Panc1 (cell line): ENCODE measurements at regions of chr6 and their contacts with region 1.

Region 1: DNA sequence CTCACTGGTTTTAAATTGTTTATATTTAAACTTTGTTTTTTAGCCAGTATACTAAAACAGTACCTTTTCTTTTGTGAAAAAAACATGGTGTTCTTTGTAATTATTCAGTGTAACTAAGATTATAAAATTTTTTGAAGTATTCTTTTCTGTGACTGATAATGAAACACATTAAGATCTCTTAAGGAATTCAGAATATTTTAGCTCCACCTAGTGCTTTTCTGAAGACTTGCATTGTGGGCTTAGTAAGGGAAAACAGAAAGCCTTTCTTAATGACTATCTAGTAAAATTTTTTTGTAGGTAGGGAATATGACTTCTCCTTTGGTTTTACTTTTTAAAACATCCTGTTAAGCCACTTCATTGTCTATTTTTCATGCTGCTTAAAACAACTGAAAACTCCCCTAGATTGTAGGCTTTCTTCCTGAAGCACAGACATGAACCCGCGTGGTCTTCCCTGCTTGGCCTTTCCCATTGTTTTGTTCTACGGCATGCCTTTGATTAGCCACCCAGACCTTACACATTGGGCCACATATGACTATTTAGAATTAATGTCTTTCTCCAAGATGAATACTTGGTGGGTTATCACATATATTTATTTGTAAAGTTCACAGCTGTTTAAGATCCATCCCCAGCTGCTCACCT is 72.1 kb downstream of the AFDN start:
- DNase-seq: no peak
- ATAC-seq: peak; percentile 72; the same call in 1 of the 2 replicates
- H3K4me3 ChIP-seq: no peak overlapping the region
- H3K27ac ChIP-seq: no peak overlapping the region
- H3K4me1 ChIP-seq: no peaks in the 10 kb centered on the region
- H3K27me3 ChIP-seq: no peaks in the 10 kb centered on the region
- CTCF ChIP-seq: peak; percentile 75

Region 2: DNA sequence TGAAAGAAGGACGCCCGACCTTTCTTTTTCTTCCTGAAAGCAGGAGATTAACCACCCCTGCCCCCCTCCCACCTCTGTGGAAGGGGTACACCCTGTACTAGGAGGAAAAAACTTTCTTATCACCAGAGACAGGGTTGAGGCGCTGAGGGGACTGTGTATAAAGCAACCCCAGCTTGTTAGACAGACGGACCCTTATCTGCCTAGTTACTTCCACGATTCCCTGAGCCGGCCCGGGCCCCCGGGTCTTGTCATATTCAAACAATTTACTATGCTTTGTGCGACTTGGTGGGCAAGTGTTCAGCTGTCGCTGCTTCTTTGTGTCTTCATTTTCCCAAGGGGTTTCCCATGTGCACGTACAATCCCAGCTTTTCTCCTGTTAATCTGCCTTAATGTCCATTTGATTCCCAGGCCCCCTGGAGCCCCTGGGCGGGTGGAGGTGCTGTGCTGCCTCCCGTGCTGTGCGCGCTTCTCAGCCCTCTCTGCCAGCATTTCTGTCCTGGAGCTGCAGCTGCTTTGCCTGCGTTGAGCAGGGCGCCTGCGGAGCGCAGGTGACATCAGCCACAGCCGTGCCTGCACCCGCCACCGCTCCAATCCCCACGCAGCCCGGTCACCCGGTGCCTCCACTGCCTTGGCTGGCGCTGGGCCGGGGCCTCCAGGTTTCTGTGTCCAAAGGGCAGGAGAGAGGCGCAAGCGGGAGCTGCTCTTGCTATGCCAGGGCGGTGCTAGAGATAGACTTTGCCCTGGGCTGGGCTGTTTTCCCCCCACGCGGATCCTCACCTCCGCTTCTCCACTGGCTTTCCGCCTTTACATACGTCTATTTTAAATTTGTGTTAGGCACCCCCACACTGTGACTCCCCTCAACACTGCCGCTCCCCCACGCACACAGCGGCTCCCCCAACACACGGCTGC is 477.7 kb before region 1 on chr6:
- CTCF ChIA-PET with region 1: no interaction called
- POLR2A ChIA-PET with region 1: no interaction called
- in situ Hi-C with region 1: no loop called
- intact Hi-C with region 1: loop called (anchors 5 kb)
- DNase-seq: no peak
- ATAC-seq: peak; percentile 82
- H3K4me3 ChIP-seq: peak overlapping the region; percentile 21 to 48
- H3K27ac ChIP-seq: no peak overlapping the region
- H3K4me1 ChIP-seq: peaks cover 4% of the 10 kb centered on the region
- H3K27me3 ChIP-seq: peaks cover 34% of the 10 kb centered on the region
- CTCF ChIP-seq: no peak

Region 3: GRCh38 chr6:167877994-167878779 is 20.6 kb before region 1 on chr6:
- CTCF ChIA-PET with region 1: no interaction called
- POLR2A ChIA-PET with region 1: no interaction called
- in situ Hi-C with region 1: no loop called
- intact Hi-C with region 1: no loop called
- DNase-seq: no peak
- ATAC-seq: no peak
- H3K4me3 ChIP-seq: no peak overlapping the region
- H3K27ac ChIP-seq: no peak overlapping the region
- H3K4me1 ChIP-seq: no peaks in the 10 kb centered on the region
- H3K27me3 ChIP-seq: no peaks in the 10 kb centered on the region
- CTCF ChIP-seq: no peak

Region 4: GRCh38 chr6:168815229-168815628 is 916.4 kb after region 1 on chr6:
- CTCF ChIA-PET with region 1: no interaction called
- POLR2A ChIA-PET with region 1: no interaction called
- in situ Hi-C with region 1: no loop called
- intact Hi-C with region 1: no loop called
- DNase-seq: no peak
- ATAC-seq: no peak; the same call in 1 of the 2 replicates
- H3K4me3 ChIP-seq: no peak overlapping the region
- H3K27ac ChIP-seq: no peak overlapping the region
- H3K4me1 ChIP-seq: no peaks in the 10 kb centered on the region
- H3K27me3 ChIP-seq: peaks cover 24% of the 10 kb centered on the region
- CTCF ChIP-seq: peak; percentile 56